ENCODE measurements at regions of chr17 and their contacts with region 1.

Region 1: GRCh38 chr17:34009912-34010311 is 245.2 kb upstream of the CCL2 start:
- DNase-seq: no peak
- ATAC-seq: no peak
- H3K4me3 ChIP-seq: no peak overlapping the region
- H3K27ac ChIP-seq: no peak overlapping the region
- H3K4me1 ChIP-seq: no peaks in the 10 kb centered on the region
- H3K27me3 ChIP-seq: no peaks in the 10 kb centered on the region
- CTCF ChIP-seq: no peak

Region 2: DNA sequence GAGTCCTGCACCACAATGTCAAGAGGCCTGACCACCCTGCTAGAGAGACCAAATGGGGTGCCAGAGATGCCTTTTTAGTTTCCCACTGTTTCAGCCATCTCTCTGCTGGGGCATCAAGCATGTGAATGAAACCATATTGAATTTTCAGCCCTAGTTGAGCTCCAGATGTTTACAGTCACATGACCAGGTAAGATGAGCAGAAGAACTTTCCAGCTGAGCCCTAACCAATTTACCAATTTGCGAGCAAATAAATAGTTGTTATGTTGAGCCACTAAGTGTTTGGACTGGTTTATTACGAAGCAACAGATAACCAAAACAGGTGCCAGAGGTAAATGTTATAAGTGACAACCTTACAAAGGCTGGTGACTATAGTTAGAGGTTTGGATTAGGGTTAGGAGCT is 36.1 kb after region 1 on chr17:
- CTCF ChIA-PET with region 1: no interaction called
- POLR2A ChIA-PET with region 1: no interaction called
- in situ Hi-C with region 1: no loop called
- intact Hi-C with region 1: loop called (anchors 5 kb)
- DNase-seq: no peak
- ATAC-seq: no peak
- H3K4me3 ChIP-seq: no peak overlapping the region
- H3K27ac ChIP-seq: no peak overlapping the region
- H3K4me1 ChIP-seq: no peaks in the 10 kb centered on the region
- H3K27me3 ChIP-seq: peaks cover 5% of the 10 kb centered on the region
- CTCF ChIP-seq: no peak